ENCODE measurements at regions of chr15 and their contacts with region 1.

Region 1: GRCh38 chr15:25739687-25740121 is 123.4 kb downstream of the ATP10A start:
- DNase-seq: no peak
- ATAC-seq: no peak
- H3K4me3 ChIP-seq: no peak overlapping the region
- H3K27ac ChIP-seq: peak overlapping the region in 1 of 2 donors; percentile 56
- H3K4me1 ChIP-seq: peaks cover 0 to 22% of the 10 kb centered on the region in 2 donors
- H3K27me3 ChIP-seq: no peaks in the 10 kb centered on the region

Region 2: DNA sequence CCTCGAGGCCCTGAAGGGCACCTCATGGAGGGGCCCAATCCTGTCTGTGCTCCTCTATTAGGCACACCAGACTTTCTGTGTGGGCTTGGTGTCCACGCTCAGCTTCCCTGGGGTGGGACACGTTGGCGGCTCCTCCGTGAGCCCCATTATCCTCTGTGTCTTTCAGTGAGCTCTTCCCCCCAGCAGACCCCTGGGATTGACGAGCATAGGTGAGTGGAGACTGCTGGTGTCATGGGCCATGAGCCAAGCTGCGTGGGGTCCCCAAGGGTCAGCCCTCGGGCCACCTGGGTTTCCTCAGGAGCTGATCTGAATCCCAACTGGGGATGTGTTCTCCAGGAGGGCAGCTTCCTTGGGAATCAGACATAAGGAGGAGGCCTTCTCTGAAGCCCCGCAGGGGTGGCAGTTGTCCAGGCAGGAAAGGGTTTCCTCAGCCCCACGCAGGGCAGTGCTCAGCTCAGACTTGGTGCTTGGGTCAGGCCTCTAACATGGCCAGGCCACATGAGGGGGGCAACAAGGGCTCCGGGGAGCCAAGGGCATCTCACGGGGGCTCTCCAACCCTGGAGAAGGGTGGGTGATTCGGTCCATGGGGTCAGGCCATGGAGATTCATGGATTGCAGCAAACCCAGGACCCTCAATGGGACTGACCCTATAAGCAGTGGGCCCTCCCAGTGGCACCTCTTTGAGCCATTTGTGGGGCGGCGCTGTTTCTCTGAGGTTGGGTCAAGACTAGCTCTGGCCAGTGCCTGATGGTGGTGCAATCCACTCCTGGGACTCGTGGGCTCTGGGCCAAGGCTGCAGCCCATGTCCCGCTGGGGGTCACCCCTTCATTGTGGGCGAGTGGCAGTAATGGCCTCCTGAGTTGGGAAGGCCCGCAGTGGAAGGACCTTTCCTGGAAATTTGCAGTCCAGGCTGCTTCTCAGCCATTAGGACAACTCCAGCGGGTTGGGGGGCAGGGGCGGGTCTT is 562.4 kb before region 1 on chr15:
- intact Hi-C with region 1: no loop called
- DNase-seq: peak; percentile 30 to 37
- ATAC-seq: no peak
- H3K4me3 ChIP-seq: no peak overlapping the region
- H3K27ac ChIP-seq: no peak overlapping the region
- H3K4me1 ChIP-seq: no peaks in the 10 kb centered on the region
- H3K27me3 ChIP-seq: no peaks in the 10 kb centered on the region

Region 3: GRCh38 chr15:25775317-25775912 is 35.7 kb after region 1 on chr15:
- intact Hi-C with region 1: loop called (anchors 5 kb)
- DNase-seq: peak; percentile 57 to 77
- ATAC-seq: no peak
- H3K4me3 ChIP-seq: no peak overlapping the region
- H3K27ac ChIP-seq: peak overlapping the region in 1 of 2 donors; percentile 0
- H3K4me1 ChIP-seq: no peaks in the 10 kb centered on the region
- H3K27me3 ChIP-seq: no peaks in the 10 kb centered on the region